Spleen (tissue), 13 donors: ENCODE measurements at regions of chr13 and their contacts with region 1.

Region 1: GRCh38 chr13:79541426-79542049 is 60.6 kb downstream of the NDFIP2 start:
- DNase-seq: no peak
- H3K4me3 ChIP-seq: no peak overlapping the region
- H3K27ac ChIP-seq: no peak overlapping the region
- H3K4me1 ChIP-seq: peaks cover 0 to 3% (median 0%) of the 10 kb centered on the region in 6 donors
- H3K27me3 ChIP-seq: no peaks in the 10 kb centered on the region
- CTCF ChIP-seq: peak; percentile 36 to 90 (median 76)
- POLR2A ChIP-seq: no peak

Region 2: DNA sequence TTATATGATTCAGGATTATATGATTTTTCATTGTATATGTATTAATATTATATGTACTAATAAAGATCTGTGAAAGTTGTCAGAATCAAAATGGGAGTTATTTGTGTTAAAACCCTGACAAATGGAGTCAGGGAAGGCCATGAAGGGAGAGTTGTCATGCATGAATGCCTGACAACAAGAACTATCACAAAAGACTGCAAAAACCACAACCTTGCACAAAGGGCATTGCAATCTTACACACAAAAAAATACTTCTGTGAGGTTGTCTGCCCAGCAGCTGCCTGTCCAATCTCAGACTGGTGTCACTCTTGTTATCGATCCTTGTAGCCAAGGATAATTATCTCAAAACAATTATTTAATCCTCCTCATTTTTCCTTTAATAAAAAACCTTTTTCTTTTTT is 114.3 kb before region 1 on chr13:
- intact Hi-C with region 1: loop called (anchors 5 kb)
- DNase-seq: no peak
- H3K4me3 ChIP-seq: no peak overlapping the region
- H3K27ac ChIP-seq: no peak overlapping the region
- H3K4me1 ChIP-seq: no peaks in the 10 kb centered on the region
- H3K27me3 ChIP-seq: no peaks in the 10 kb centered on the region
- CTCF ChIP-seq: no peak
- POLR2A ChIP-seq: no peak